CD8-positive, alpha-beta memory T cell (primary cell): ENCODE measurements at regions of chr1 and their contacts with region 1.

Region 1: GRCh38 chr1:20732588-20733360 is at the start of gene SH2D5:
- DNase-seq: peak; percentile 52 to 83 (median 54)
- H3K4me3 ChIP-seq: peak within 1 kb of the TSS; percentile 83
- H3K4me3 Mint-ChIP-seq: peak within 1 kb of the TSS; percentile 81 to 93 (median 85)
- H3K27ac ChIP-seq: no peak within 1 kb of the TSS
- H3K27ac Mint-ChIP-seq: peak within 1 kb of the TSS in 7 of 8 donors; percentile 1 to 92 (median 68)
- H3K4me1 ChIP-seq: peaks cover 17% of the 10 kb centered on the region
- H3K4me1 Mint-ChIP-seq: peaks cover 14 to 39% (median 21%) of the 10 kb centered on the region in 3 donors
- H3K27me3 ChIP-seq: peaks cover 8% of the 10 kb centered on the region
- H3K27me3 Mint-ChIP-seq: peaks cover 0 to 9% of the 10 kb centered on the region in 2 donors
- total RNA-seq, gene SH2D5: 0.13 to 0.24 TPM

Region 2: GRCh38 chr1:20786253-20787028 is 53.7 kb after region 1 on chr1:
- CTCF ChIA-PET with region 1: no interaction called
- POLR2A ChIA-PET with region 1: interaction called, 13 read pairs
- DNase-seq: peak; percentile 93 to 98 (median 96)
- H3K4me3 ChIP-seq: peak overlapping the region; percentile 80
- H3K4me3 Mint-ChIP-seq: peak overlapping the region; percentile 95 to 99 (median 99)
- H3K27ac ChIP-seq: peak overlapping the region; percentile 90
- H3K27ac Mint-ChIP-seq: peak overlapping the region; percentile 88 to 99 (median 98)
- H3K4me1 ChIP-seq: peaks cover 32% of the 10 kb centered on the region
- H3K4me1 Mint-ChIP-seq: peaks cover 29 to 50% (median 41%) of the 10 kb centered on the region in 3 donors
- H3K27me3 ChIP-seq: no peaks in the 10 kb centered on the region
- H3K27me3 Mint-ChIP-seq: peaks cover 0 to 3% of the 10 kb centered on the region in 2 donors